Mucosa of descending colon (tissue), 3 donors: ENCODE measurements at regions of chr3 and their contacts with region 1.

Region 1: DNA sequence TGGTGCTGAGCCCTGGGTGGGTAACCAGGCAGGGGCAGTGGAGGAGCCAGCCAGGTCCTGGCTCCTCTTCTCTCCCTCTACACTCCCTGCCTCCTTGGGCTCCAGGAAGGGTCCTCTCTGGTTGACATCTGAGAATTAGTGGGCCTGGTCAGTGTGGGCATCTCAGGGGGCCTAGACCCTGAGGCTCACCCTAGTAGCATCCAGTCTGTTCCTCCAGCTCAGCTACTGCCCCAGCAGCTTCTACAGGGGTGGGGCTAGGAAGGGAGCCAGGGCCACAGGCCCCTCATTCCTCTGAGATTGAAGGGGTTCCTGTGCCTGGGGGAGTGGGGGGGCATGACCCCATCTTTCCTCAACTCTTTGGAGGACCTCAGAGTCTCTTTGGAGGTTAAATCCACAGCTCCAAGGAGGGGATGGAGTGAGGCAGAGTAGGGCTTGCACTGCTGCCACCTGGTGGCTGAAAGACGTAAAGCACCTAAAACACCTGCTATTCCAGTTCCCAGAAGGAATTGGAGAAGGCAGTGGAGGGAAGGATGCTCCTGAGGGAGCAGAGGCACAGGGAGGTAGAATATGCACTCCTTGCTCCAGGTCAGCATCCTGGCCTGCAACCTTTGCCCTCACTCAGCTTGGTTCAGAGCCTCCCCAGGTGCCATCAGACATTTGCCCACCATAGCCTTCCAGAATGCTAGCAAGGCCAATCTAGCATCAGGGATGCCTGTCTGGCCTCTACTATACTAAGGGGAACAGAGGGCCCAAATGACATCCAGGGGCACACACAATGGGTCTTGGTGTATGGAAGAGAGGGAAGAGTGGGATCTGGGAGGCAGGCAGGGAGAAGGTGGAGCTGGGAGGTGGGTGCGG is 25.1 kb downstream of the C3orf18 start:
- DNase-seq: peak in 2 of 3 donors; percentile 71 to 87
- ATAC-seq: peak; percentile 86
- H3K4me3 ChIP-seq: no peak overlapping the region
- H3K4me1 ChIP-seq: no peaks in the 10 kb centered on the region
- CTCF ChIP-seq: peak; percentile 87

Region 2: GRCh38 chr3:50347194-50347918 is 195.1 kb before region 1 on chr3:
- intact Hi-C with region 1: loop called in 1 of 2 experiments (anchors 5 kb)
- DNase-seq: peak in 2 of 3 donors; percentile 73 to 77
- ATAC-seq: peak; percentile 15
- H3K4me3 ChIP-seq: no peak overlapping the region
- H3K4me1 ChIP-seq: peaks cover 31% of the 10 kb centered on the region
- CTCF ChIP-seq: no peak

Region 3: DNA sequence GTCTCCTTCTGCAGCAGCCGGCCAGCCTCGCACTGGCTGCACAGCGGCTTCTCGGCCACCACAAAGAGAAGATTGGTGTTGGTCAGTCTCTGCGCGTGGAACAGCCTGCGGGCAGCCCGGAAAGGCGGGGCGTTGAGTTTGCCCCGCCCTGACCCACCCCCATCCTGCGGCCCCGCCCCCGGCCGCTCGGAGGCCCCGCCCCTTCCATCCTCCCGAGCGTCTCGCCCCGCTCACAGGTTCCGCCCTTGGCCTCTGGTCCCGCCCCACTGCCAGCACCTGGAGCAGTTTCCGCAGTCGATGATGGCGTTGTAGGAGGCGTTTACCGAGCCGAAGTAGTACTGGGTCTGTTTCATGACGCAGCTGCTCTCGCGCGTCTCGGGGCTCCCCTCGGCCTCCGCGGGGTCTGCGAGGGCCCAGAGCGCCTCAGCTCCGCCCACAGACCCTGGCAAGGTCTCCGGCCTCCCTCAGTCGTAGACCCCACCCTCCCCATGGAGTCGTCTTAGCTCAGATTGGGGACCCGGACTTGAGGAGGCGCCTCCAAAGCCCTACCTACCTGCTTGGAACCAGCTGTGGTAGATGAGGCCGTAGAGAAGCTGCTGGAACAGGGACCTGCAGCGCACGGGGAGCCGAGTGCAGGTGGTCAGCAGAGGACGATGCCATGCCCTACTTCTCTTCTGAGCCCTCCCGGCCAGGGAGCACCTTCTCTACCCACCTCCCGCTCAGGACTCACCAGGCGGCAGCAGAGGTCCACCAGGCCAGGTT is 177.1 kb before region 1 on chr3:
- intact Hi-C with region 1: loop called in 1 of 2 experiments (anchors 10 kb)
- DNase-seq: peak; percentile 96 to 97 (median 96)
- ATAC-seq: peak; percentile 97
- H3K4me3 ChIP-seq: peak overlapping the region; percentile 20
- H3K4me1 ChIP-seq: peaks cover 8% of the 10 kb centered on the region
- CTCF ChIP-seq: no peak

Region 4: GRCh38 chr3:50436114-50436674 is 106.2 kb before region 1 on chr3:
- intact Hi-C with region 1: loop called (anchors 10 kb)
- DNase-seq: peak; percentile 69 to 85 (median 82)
- ATAC-seq: peak; percentile 88
- H3K4me3 ChIP-seq: no peak overlapping the region
- H3K4me1 ChIP-seq: no peaks in the 10 kb centered on the region
- CTCF ChIP-seq: peak; percentile 86